IMR-90 (cell line): ENCODE measurements at regions of chr12 and their contacts with region 1.

Region 1: DNA sequence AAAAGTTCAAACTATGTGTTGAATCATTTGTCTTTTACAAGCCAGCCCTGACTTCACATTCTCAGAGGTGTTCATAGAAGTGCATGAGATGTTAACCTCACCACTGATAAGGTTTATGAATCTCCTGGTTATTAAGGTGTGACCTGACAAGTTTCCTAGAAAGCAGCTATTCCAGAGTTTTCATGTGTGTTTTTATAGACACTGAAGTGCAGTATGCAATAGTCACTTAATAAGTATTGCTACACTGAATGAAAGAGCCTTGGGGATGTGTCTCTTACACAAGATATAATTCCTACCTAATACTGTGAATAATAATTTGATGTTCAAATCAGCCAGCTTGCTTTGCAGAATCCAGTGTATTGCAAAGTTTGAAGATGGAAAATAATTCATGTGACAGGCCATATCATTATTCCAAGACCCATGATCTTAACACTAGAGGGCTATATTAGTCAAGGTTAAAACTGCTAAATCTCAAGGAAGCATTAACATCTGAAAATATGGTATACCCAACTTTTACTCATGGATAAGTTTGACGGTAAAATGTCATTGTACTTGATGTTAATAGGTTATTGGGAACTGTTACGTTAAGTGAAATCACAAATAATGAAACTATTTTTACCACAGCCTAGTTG is 13.0 kb downstream of the SLC25A3 start:
- DNase-seq: no peak
- ATAC-seq: 0 out of 2 replicates have a peak, but pooled peaks have one; percentile 19
- H3K4me3 ChIP-seq: no peak overlapping the region
- H3K27ac ChIP-seq: no peak overlapping the region
- H3K4me1 ChIP-seq: no peaks in the 10 kb centered on the region
- H3K27me3 ChIP-seq: no peaks in the 10 kb centered on the region
- CTCF ChIP-seq: 0 out of 2 replicates have a peak, but pooled peaks have one; percentile 9
- POLR2A ChIP-seq: no peak
- RAD21 ChIP-seq: no peak

Region 2: DNA sequence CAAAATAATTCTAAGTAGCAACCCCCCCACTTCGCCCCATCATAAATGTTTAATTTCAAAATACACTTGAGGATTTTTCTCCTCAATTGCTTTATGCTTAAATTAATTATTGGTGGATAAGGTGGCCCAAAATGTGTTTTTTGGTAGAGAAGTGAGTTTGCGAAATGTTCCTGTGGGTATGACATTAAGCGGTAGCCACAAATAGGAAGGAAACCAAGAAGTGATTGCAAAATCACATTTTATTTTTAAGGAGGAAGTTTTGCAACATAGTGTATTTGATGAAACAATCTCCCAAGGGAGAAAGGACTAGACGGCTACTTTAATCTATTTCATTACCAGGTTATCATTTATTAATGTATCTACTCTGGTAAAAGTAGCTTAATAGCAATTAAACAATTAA is 12.5 kb after region 1 on chr12:
- CTCF ChIA-PET with region 1: interaction called, 10 read pairs
- POLR2A ChIA-PET with region 1: no interaction called
- dilution Hi-C with region 1: no loop called
- in situ Hi-C with region 1: no loop called
- intact Hi-C with region 1: no loop called
- DNase-seq: peak; percentile 25
- ATAC-seq: no peak
- H3K4me3 ChIP-seq: no peak overlapping the region
- H3K27ac ChIP-seq: no peak overlapping the region
- H3K4me1 ChIP-seq: no peaks in the 10 kb centered on the region
- H3K27me3 ChIP-seq: no peaks in the 10 kb centered on the region
- CTCF ChIP-seq: no peak
- POLR2A ChIP-seq: no peak
- RAD21 ChIP-seq: no peak

Region 3: DNA sequence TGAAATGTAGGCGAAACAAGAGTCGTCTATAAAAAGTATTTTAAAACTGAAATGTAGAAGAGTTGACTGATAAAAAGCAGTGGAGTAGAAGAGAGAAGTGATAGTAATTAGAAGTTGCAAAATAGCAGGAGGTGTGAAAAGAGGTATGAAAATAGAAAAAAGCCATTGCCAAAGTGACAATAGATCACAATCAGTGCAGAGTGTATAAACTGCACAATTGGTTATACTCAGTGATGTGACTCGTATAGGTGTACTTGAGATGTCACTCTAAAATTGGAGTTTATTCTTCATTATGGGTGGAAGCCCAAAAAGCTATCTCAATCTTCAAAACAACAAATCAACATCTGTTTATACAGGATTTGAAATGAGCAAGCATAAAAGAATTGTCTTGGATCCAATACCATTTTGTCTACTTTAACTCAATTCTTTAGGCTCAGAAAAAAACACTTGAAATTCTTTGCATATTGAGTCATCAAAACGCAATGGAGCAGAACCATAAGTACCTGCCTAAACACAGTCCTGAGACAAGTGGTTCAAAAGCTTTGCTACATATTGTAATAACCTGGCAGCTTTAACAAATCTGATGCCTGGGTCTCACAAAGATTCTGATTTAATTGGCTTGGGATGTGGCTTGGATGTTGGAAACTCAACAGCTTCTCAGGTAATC is 29.3 kb after region 1 on chr12:
- CTCF ChIA-PET with region 1: interaction called, 3 read pairs
- POLR2A ChIA-PET with region 1: no interaction called
- dilution Hi-C with region 1: no loop called
- in situ Hi-C with region 1: loop called (anchors 5 kb)
- intact Hi-C with region 1: no loop called
- DNase-seq: peak; percentile 77
- ATAC-seq: peak; percentile 92
- H3K4me3 ChIP-seq: no peak overlapping the region
- H3K27ac ChIP-seq: no peak overlapping the region
- H3K4me1 ChIP-seq: peaks cover 6% of the 10 kb centered on the region; the same call in 1 of the 2 replicates
- H3K27me3 ChIP-seq: no peaks in the 10 kb centered on the region
- CTCF ChIP-seq: no peak
- POLR2A ChIP-seq: no peak
- RAD21 ChIP-seq: no peak

Region 4: GRCh38 chr12:98743347-98743953 is 137.0 kb after region 1 on chr12:
- CTCF ChIA-PET with region 1: no interaction called
- POLR2A ChIA-PET with region 1: no interaction called
- dilution Hi-C with region 1: no loop called
- in situ Hi-C with region 1: no loop called
- intact Hi-C with region 1: no loop called
- DNase-seq: peak; percentile 22
- ATAC-seq: peak; percentile 59
- H3K4me3 ChIP-seq: no peak overlapping the region
- H3K27ac ChIP-seq: no peak overlapping the region
- H3K4me1 ChIP-seq: no peaks in the 10 kb centered on the region
- H3K27me3 ChIP-seq: peaks cover 8% of the 10 kb centered on the region
- CTCF ChIP-seq: peak; percentile 54
- POLR2A ChIP-seq: no peak
- RAD21 ChIP-seq: peak; percentile 13; the same call in 1 of the 2 replicates

Region 5: GRCh38 chr12:99092100-99092851 is 485.8 kb after region 1 on chr12:
- CTCF ChIA-PET with region 1: no interaction called
- POLR2A ChIA-PET with region 1: no interaction called
- dilution Hi-C with region 1: no loop called
- in situ Hi-C with region 1: no loop called
- intact Hi-C with region 1: no loop called
- DNase-seq: no peak
- ATAC-seq: no peak
- H3K4me3 ChIP-seq: no peak overlapping the region
- H3K27ac ChIP-seq: no peak overlapping the region
- H3K4me1 ChIP-seq: no peaks in the 10 kb centered on the region
- H3K27me3 ChIP-seq: no peaks in the 10 kb centered on the region
- CTCF ChIP-seq: no peak
- POLR2A ChIP-seq: no peak
- RAD21 ChIP-seq: no peak